PC-3 (cell line): ENCODE measurements at regions of chr11 and their contacts with region 1.

Region 1: DNA sequence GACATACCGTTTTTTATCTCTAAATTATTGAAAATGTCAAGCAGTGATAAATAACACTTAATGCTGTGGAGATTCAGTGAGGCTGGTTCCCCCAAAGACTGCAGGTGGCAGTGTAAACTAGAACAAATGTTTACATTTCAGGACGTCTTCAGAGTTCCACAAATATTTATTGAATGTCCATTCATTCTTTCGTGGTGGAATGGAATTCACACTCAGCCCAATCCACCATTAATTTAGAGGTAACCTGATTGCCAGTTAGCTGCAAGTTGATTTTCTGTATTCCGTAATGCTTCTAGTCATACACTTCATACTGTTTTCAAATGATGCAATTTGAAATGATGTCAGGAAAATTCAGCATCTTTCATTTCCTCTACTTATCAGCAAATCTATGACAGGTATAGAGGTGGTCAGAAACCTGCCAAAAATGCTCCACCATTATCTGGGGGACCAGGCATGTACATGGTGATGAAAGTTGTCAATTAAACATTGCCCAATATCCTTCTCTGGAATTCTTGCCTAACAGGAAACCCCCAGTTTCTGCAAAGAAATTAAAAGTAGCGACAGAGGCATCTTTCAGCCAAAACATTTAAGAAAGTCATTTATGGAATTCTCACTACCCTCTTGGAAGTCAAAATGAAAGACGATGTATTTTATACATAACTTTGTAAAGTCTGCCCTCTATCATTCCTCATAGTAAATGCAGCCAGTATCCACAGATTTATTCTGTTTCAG is 94.3 kb upstream of the BMAL1 start:
- DNase-seq: peak; percentile 66
- ATAC-seq: peak; percentile 92
- H3K4me3 ChIP-seq: peak overlapping the region; percentile 59
- H3K27ac ChIP-seq: no peak overlapping the region
- H3K4me1 ChIP-seq: peaks cover 3% of the 10 kb centered on the region; the same call in 1 of the 2 replicates
- H3K27me3 ChIP-seq: no peaks in the 10 kb centered on the region
- CTCF ChIP-seq: peak; percentile 61

Region 2: GRCh38 chr11:13276832-13277767 is 93.8 kb after region 1 on chr11:
- CTCF ChIA-PET with region 1: no interaction called
- POLR2A ChIA-PET with region 1: no interaction called
- intact Hi-C with region 1: no loop called
- DNase-seq: peak; percentile 96
- ATAC-seq: peak; percentile 93
- H3K4me3 ChIP-seq: peak overlapping the region; percentile 94
- H3K27ac ChIP-seq: no peak overlapping the region
- H3K4me1 ChIP-seq: no peaks in the 10 kb centered on the region
- H3K27me3 ChIP-seq: peaks cover 22% of the 10 kb centered on the region; the same call in 1 of the 2 replicates
- CTCF ChIP-seq: no peak

Region 3: DNA sequence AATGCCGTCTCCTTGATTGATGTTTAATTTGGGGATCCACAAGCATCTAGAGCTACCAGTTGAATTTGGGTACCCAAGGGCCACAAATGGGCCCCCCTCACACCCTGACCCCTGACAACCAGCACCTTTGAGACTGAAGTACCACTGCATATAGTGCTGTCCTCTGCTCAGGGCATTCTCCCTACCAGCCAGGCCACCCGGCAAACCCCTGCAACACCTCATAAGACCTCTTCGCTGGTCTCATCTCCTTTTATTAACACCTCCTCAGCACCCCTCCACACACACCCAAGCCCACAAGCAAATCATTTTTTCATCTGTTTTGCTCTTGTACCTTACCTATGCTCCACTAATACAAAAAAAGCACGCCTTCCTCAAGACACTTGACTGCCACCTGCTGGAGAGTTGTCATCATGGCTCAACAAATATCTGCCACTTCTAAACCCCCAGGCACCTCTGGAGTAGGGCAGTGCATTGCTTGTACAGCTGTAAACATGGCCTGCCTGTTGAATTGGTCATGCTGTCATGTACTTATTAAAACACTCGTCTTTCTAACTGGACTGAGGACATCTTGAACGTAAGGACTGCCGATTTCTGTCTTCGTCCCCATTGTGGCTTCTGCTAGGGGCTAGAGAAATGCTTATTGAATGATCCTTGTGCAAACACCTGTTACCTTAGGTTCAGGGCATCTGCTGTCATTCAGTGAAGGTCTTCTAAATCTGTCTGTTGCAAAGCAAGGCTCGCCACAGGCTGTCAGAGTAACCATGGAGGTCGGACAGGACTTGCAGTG is 160.9 kb after region 1 on chr11:
- CTCF ChIA-PET with region 1: no interaction called
- POLR2A ChIA-PET with region 1: no interaction called
- intact Hi-C with region 1: loop called (anchors 1 kb)
- DNase-seq: peak; percentile 88
- ATAC-seq: peak; percentile 35
- H3K4me3 ChIP-seq: no peak overlapping the region
- H3K27ac ChIP-seq: no peak overlapping the region
- H3K4me1 ChIP-seq: peaks cover 15% of the 10 kb centered on the region
- H3K27me3 ChIP-seq: no peaks in the 10 kb centered on the region
- CTCF ChIP-seq: peak; percentile 89

Region 4: DNA sequence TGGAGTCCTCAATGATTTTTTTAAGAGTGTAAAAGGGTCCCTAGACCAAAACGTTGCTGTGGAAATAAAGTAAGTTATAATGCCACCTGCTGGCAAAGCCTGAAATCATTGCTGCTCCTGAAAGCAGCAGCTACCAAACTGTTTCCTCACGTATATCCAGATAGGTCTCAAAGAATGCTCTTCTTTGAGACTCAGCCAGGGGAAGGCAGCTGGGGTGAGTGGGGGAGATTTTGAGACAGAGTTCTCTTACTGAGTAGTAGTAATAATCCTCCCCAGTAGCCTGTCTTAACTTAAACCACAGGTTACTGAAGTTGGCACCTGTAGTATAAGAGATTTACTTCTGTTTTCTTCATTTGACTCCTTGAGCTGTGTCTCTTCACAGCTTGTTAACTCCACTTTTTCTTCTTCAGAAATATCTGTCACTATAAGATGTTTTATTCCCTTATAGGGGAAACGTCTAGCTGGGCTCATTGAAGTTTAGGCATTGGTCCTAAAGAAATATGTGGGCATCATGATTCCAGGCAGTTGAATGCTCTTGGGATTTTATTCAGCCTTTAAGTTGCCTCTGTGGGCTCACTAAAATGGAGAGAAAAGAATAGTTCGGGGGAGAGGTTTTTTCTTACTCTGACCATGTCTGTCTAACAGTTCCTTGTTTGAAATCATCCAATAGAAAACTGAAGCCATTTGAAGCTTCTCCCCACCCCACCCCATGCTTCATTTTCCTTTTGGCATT is 201.8 kb after region 1 on chr11:
- CTCF ChIA-PET with region 1: interaction called, 3 read pairs
- POLR2A ChIA-PET with region 1: no interaction called
- intact Hi-C with region 1: loop called (anchors 1 kb)
- DNase-seq: peak; percentile 52
- ATAC-seq: peak; percentile 60
- H3K4me3 ChIP-seq: no peak overlapping the region
- H3K27ac ChIP-seq: no peak overlapping the region
- H3K4me1 ChIP-seq: no peaks in the 10 kb centered on the region
- H3K27me3 ChIP-seq: no peaks in the 10 kb centered on the region
- CTCF ChIP-seq: peak; percentile 78